Heart left ventricle (tissue), 16 donors: ENCODE measurements at regions of chr2 and their contacts with region 1.

Region 1: GRCh38 chr2:67516899-67517530 is 119.9 kb downstream of the ETAA1 start:
- DNase-seq: peak in 1 of 5 donors; percentile 12
- ATAC-seq: no peak
- H3K4me3 ChIP-seq: no peak overlapping the region
- H3K27ac ChIP-seq: peak overlapping the region in 1 of 12 donors; percentile 54
- H3K4me1 ChIP-seq: no peaks in the 10 kb centered on the region
- H3K27me3 ChIP-seq: no peaks in the 10 kb centered on the region
- CTCF ChIP-seq: no peak
- POLR2A ChIP-seq: no peak

Region 2: DNA sequence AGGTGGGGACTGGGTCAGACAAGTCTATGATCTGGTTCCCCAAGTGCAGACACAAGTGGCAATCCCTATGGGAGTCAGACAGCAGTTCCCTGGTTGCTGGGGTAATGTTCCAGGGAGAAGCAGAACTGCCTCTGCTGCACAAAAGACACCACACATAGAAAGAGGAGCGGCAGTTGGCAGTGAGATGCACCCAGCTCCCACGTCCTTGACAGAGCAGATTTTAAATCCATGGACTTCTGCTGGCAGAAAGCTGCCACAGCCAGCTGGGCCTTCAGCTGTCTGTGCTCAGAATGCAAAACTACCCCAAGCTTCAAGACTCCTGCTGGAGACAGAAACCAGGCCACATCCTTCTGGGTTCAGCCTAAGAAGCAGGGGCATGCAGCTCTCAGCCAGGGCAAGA is 27.3 kb after region 1 on chr2:
- intact Hi-C with region 1: loop called in 1 of 10 experiments (anchors 1 kb)
- DNase-seq: no peak
- ATAC-seq: no peak
- H3K4me3 ChIP-seq: no peak overlapping the region
- H3K27ac ChIP-seq: no peak overlapping the region
- H3K4me1 ChIP-seq: no peaks in the 10 kb centered on the region
- H3K27me3 ChIP-seq: no peaks in the 10 kb centered on the region
- CTCF ChIP-seq: no peak
- POLR2A ChIP-seq: no peak